Thyroid gland (tissue), 4 donors: ENCODE measurements at regions of chr1 and their contacts with region 1.

Region 1: DNA sequence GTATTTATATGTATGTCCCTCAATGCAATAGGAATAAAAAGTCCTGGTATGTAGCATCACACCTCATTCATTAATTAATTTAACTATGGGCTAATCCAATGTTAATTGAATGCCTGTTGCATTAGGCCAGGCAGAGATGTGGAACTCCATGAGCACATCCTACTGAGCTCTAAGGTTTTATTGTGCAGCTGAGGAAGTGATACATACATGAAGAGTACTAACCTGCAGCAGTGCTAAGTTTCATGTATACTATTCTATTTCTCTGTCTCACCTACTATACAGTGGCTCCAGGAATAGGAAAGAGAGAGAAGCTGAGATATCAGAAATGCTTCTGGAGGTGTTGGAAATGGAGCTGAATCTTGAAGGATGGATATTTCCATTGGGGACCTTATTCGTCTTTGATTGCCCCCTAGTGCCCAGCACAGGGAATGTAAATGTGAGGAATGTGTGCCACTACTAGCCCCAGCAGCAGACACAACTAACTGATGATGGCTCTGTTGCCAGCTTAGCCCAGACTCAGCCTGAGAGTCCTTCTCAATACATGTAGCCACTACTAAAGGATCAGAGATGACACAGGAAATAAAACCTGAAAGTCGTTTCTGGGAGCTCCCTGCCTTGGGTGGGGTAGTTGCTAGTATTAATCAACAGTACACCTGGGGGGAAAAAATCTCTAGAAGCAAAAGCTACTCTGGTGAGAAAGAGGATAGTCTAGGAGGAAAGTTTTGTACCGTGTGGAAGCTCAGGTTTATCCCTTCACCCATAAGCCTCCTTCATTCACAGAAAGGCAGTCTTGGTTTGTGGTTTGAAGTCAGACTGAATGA is 173.3 kb upstream of the FOXD3 start:
- DNase-seq: peak; percentile 51 to 57
- H3K4me3 ChIP-seq: no peak overlapping the region
- H3K27ac ChIP-seq: no peak overlapping the region
- H3K4me1 ChIP-seq: no peaks in the 10 kb centered on the region
- H3K27me3 ChIP-seq: no peaks in the 10 kb centered on the region
- CTCF ChIP-seq: peak in 5 of 6 experiments; percentile 19 to 77 (median 69)
- POLR2A ChIP-seq: no peak

Region 2: DNA sequence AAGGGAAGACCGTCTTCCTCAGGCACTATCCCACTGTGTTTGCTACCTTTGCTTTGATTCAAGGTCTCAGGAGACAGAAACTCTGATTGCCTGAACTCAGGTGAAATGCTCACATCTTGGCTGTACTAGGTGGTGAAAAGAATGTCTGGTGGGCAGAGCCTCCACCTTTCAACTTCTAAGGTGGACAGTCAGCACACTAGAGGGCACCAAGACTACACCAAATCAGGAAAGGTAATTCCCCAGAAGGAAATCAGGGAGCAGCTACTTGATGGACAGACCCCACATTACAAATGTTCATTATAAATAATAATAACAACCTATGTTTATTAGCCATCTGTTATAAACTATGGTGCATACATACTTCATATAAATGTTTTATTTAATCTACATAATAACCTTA is 144.2 kb before region 1 on chr1:
- intact Hi-C with region 1: loop called (anchors 5 kb)
- DNase-seq: peak; percentile 37 to 38
- H3K4me3 ChIP-seq: no peak overlapping the region
- H3K27ac ChIP-seq: no peak overlapping the region
- H3K4me1 ChIP-seq: no peaks in the 10 kb centered on the region
- H3K27me3 ChIP-seq: no peaks in the 10 kb centered on the region
- CTCF ChIP-seq: peak in 4 of 6 experiments; percentile 30 to 62 (median 59)
- POLR2A ChIP-seq: no peak

Region 3: DNA sequence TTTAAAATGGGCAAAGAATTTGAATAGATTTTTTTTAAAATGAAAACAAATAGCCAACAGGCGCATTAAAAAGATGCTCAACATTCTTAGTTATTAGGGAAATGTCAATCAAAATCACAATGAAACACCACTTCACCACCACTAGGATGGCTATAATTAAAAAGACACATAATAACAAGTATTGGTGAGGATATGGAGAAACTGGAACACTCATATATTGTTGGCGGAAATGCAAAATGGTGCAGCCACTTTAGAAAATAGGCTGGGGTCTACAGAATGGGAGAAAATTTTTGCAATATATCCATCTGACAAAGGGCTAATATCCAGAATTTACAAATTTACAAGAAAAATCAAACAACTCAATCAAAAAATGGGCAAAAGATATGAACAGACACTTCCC is 65.5 kb after region 1 on chr1:
- intact Hi-C with region 1: no loop called
- DNase-seq: no peak
- H3K4me3 ChIP-seq: no peak overlapping the region
- H3K27ac ChIP-seq: no peak overlapping the region
- H3K4me1 ChIP-seq: no peaks in the 10 kb centered on the region
- H3K27me3 ChIP-seq: no peaks in the 10 kb centered on the region
- CTCF ChIP-seq: no peak
- POLR2A ChIP-seq: no peak